Transverse colon (tissue), 4 donors: ENCODE measurements at regions of chr14 and their contacts with region 1.

Region 1: DNA sequence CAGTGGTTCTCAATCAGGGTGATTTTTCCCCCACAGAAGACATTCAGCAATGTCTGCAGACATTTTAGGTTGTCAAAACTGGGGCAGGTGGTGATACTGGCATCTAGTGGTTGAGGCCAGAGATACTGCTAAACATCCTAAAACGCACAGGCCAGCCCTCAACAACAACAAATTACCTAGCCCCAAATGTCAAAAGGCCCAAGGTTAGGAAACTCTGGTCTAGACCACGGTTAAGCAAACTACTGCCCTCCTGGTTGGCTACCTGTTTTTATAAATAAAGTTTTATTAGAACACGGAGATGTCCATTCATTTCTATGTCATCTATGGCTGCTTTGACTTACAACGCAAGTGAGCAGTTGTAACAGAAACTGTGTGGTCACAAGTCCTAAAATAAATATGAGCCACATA is 186.7 kb downstream of the EFCAB11 start:
- DNase-seq: peak; percentile 51
- H3K4me3 ChIP-seq: no peak overlapping the region
- H3K27ac ChIP-seq: no peak overlapping the region
- H3K4me1 ChIP-seq: peaks cover 0 to 4% (median 0%) of the 10 kb centered on the region in 4 donors
- H3K27me3 ChIP-seq: no peaks in the 10 kb centered on the region
- CTCF ChIP-seq: peak; percentile 51 to 78 (median 56)
- EP300 ChIP-seq: no peak
- POLR2A ChIP-seq: no peak

Region 2: GRCh38 chr14:89185919-89186855 is 581.7 kb before region 1 on chr14:
- in situ Hi-C with region 1: loop called in 2 of 4 experiments (anchors 25 kb)
- intact Hi-C with region 1: no loop called
- DNase-seq: no peak
- H3K4me3 ChIP-seq: no peak overlapping the region
- H3K27ac ChIP-seq: no peak overlapping the region
- H3K4me1 ChIP-seq: peaks cover 0 to 19% (median 0%) of the 10 kb centered on the region in 4 donors
- H3K27me3 ChIP-seq: no peaks in the 10 kb centered on the region
- CTCF ChIP-seq: no peak
- EP300 ChIP-seq: no peak
- POLR2A ChIP-seq: no peak